AG04449 (cell line): ENCODE measurements at regions of chr1 and their contacts with region 1.

Region 1: DNA sequence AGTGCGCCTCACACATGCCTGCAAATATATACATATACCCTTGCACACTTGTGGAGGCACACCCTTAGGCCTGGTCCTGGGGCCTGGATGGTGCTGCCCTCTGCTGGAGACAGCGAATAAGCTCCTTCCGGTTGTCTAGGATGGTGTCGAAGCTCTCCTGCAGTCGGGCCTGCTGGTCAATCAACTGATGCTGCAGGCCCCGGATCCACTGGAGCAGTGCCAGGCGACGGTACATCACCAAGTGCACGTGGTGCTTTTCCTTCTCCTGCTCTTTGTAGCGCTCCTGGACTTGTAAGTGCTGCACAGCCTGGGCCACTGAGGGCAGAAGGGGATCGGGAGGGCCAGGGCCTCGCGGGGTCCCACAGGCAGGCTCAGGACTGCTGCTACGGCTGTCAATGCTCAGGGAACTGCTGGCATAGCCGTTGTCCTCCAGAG is 3.1 kb downstream of the C1orf216 start:
- DNase-seq: no peak
- H3K4me3 ChIP-seq: peak overlapping the region; percentile 6; the same call in 1 of the 2 replicates
- CTCF ChIP-seq: peak; percentile 86

Region 2: GRCh38 chr1:35564037-35564883 is 151.3 kb before region 1 on chr1:
- CTCF ChIA-PET with region 1: interaction called, 657 read pairs
- POLR2A ChIA-PET with region 1: no interaction called
- DNase-seq: no peak
- H3K4me3 ChIP-seq: no peak overlapping the region
- CTCF ChIP-seq: peak; percentile 80

Region 3: GRCh38 chr1:35611655-35612054 is 103.9 kb before region 1 on chr1:
- CTCF ChIA-PET with region 1: interaction called, 11 read pairs
- POLR2A ChIA-PET with region 1: no interaction called
- DNase-seq: no peak
- H3K4me3 ChIP-seq: no peak overlapping the region
- CTCF ChIP-seq: no peak

Region 4: GRCh38 chr1:35646043-35646442 is 69.5 kb before region 1 on chr1:
- CTCF ChIA-PET with region 1: interaction called, 15 read pairs
- POLR2A ChIA-PET with region 1: interaction called, 3 read pairs
- DNase-seq: no peak
- H3K4me3 ChIP-seq: no peak overlapping the region
- CTCF ChIP-seq: no peak

Region 5: GRCh38 chr1:35691080-35691479 is 24.5 kb before region 1 on chr1:
- CTCF ChIA-PET with region 1: interaction called, 39 read pairs
- POLR2A ChIA-PET with region 1: no interaction called
- DNase-seq: no peak
- H3K4me3 ChIP-seq: no peak overlapping the region
- CTCF ChIP-seq: no peak

Region 6: GRCh38 chr1:35747938-35748702 is 32.5 kb after region 1 on chr1:
- CTCF ChIA-PET with region 1: interaction called, 10 read pairs
- POLR2A ChIA-PET with region 1: no interaction called
- DNase-seq: no peak
- H3K4me3 ChIP-seq: no peak overlapping the region
- CTCF ChIP-seq: no peak